RWPE1 (cell line): ENCODE measurements at regions of chr1 and their contacts with region 1.

Region 1: GRCh38 chr1:111720274-111720976 is 18.8 kb downstream of the INKA2 start:
- DNase-seq: no peak
- H3K27ac ChIP-seq: peak overlapping the region; percentile 59
- CTCF ChIP-seq: no peak

Region 2: GRCh38 chr1:111507411-111508201 is 212.8 kb before region 1 on chr1:
- CTCF ChIA-PET with region 1: interaction called, 10 read pairs
- POLR2A ChIA-PET with region 1: no interaction called
- DNase-seq: peak; percentile 27
- H3K27ac ChIP-seq: peak overlapping the region; percentile 88
- CTCF ChIP-seq: no peak

Region 3: GRCh38 chr1:111769517-111770146 is 49.2 kb after region 1 on chr1:
- CTCF ChIA-PET with region 1: interaction called, 25 read pairs
- POLR2A ChIA-PET with region 1: no interaction called
- DNase-seq: peak; percentile 60
- H3K27ac ChIP-seq: no peak overlapping the region
- CTCF ChIP-seq: peak; percentile 88